Psoas muscle (tissue), 8 donors: ENCODE measurements at regions of chr7 and their contacts with region 1.

Region 1: GRCh38 chr7:110104243-110104642 is 986.7 kb upstream of the LRRN3 start:
- DNase-seq: no peak
- ATAC-seq: no peak
- H3K4me3 ChIP-seq: no peak overlapping the region
- H3K27ac ChIP-seq: no peak overlapping the region
- H3K4me1 ChIP-seq: no peaks in the 10 kb centered on the region
- H3K27me3 ChIP-seq: no peaks in the 10 kb centered on the region
- CTCF ChIP-seq: no peak

Region 2: DNA sequence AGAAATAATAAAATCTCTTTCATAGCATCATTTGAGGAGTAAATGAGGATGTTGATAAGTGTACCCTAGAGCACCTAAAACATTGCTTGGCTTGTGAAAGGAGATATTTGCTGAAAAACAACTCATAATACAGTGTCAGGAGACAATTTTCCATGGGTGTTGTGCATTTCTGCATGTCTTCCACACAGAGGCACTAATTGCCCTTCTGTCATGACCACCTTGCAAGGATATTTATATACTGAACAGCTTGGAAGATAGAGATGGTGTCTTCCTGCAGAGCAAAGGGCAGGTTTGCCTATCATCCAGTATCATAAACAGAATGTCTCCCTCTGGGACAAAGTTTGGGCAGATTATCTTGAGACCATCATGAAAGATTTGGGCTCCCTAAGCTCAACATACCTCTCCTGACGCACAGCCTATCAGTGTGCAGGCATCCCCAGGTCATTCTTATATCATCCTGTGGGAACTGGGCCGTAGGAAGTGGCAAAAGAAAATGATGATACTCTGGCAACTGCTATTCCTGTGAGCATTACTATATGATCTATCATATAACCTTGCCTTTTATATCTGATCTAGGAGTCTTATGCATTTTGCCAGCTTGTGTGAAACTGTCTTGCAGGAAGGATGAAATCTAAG is 491.6 kb after region 1 on chr7:
- intact Hi-C with region 1: no loop called
- DNase-seq: no peak
- ATAC-seq: no peak
- H3K4me3 ChIP-seq: no peak overlapping the region
- H3K27ac ChIP-seq: no peak overlapping the region
- H3K4me1 ChIP-seq: no peaks in the 10 kb centered on the region
- H3K27me3 ChIP-seq: no peaks in the 10 kb centered on the region
- CTCF ChIP-seq: no peak

Region 3: DNA sequence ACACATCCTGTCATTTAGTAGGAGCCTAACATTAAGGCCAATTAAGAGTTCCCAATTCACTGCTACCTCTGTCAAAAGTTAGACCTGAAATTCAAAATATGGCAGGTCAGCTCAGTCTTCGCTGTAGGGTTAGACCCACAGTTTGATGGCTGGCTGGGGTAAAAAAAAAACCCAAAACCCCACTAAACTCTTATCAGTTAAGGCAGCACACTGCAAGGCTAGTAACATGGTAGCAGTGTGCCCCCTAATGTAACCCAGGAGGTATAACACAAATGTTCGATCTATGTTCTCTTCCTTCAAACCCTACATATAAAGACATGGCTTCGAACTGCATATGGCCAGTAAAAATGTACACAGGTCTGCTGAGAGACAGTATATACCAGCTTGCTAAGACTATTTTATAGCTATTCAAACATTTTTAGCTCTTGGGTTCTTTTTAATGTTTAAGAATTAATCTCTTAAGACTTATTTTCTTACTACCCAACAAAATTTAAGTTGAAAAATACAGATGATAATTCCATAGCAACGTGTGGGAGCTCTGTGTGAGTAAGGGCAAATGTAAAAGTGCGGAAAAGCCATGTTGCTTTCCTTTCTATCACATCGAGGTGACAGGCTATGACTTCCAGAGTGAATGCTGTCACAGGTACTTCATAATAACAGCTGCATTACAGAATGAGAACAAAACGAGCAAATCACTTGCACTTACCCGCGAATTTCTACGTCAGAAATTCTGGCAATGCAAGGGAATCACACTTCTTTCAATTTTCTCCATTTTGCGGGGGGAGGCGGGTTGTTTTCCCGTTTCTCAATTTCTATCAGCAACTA is 1626.4 kb after region 1 on chr7:
- intact Hi-C with region 1: loop called in 1 of 2 experiments (anchors 5 kb)
- DNase-seq: no peak
- ATAC-seq: peak in 2 of 4 donors; percentile 32 to 57
- H3K4me3 ChIP-seq: no peak overlapping the region
- H3K27ac ChIP-seq: no peak overlapping the region
- H3K4me1 ChIP-seq: peaks cover 3% of the 10 kb centered on the region
- H3K27me3 ChIP-seq: no peaks in the 10 kb centered on the region
- CTCF ChIP-seq: peak; percentile 25